Spleen (tissue), 13 donors: ENCODE measurements at regions of chr14 and their contacts with region 1.

Region 1: GRCh38 chr14:69685716-69686115 is 74.3 kb downstream of the SUSD6 start:
- DNase-seq: no peak
- H3K4me3 ChIP-seq: no peak overlapping the region
- H3K27ac ChIP-seq: peak overlapping the region in 4 of 8 donors; percentile 62 to 79 (median 73)
- H3K4me1 ChIP-seq: peaks cover 48 to 100% (median 78%) of the 10 kb centered on the region in 6 donors
- H3K27me3 ChIP-seq: no peaks in the 10 kb centered on the region
- CTCF ChIP-seq: no peak
- POLR2A ChIP-seq: no peak

Region 2: DNA sequence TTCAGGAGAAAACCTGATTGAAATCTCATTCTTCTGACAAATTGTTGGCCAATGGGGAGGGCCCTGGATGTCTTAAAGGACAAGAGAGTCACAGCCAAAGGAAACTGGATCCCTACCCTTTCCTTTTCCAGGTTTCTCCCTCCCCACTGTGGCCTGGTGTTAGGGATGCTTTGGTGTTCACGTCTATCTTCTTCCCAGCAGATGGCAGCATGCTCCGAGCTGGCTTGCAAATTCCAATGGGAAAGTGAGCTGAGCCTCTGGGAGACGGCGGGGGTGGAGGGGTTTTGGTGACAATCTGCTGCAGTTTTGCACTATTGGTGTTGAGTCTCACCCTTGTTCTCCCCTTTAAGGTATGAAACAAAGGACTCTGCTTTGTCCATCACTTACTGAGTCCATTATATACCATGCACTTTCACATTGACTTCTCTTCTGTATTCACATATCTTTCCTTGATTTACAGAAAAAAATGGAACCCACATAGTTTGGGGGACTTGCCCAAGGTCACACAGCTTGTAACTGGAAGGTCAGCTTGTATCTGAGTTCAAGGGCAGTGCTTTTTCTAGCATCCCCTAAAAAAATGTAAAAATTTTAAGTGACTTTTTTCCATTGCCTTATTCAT is 150.4 kb before region 1 on chr14:
- intact Hi-C with region 1: no loop called
- DNase-seq: no peak
- H3K4me3 ChIP-seq: no peak overlapping the region
- H3K27ac ChIP-seq: no peak overlapping the region
- H3K4me1 ChIP-seq: no peaks in the 10 kb centered on the region
- H3K27me3 ChIP-seq: peaks cover 0 to 58% (median 0%) of the 10 kb centered on the region in 7 donors
- CTCF ChIP-seq: peak in 6 of 11 experiments; percentile 16 to 52 (median 30)
- POLR2A ChIP-seq: no peak

Region 3: GRCh38 chr14:69637503-69638030 is 48.1 kb before region 1 on chr14:
- intact Hi-C with region 1: loop called (anchors 10 kb)
- DNase-seq: peak; percentile 79
- H3K4me3 ChIP-seq: peak overlapping the region in 1 of 8 donors; percentile 31
- H3K27ac ChIP-seq: peak overlapping the region in 7 of 8 donors; percentile 52 to 84 (median 66)
- H3K4me1 ChIP-seq: peaks cover 68 to 100% (median 81%) of the 10 kb centered on the region in 6 donors
- H3K27me3 ChIP-seq: no peaks in the 10 kb centered on the region
- CTCF ChIP-seq: no peak
- POLR2A ChIP-seq: no peak